Activated B cell treated with CpG ODN at 0.5 μM for 24 hours (primary cell): ENCODE measurements at regions of chr1 and their contacts with region 1.

Region 1: GRCh38 chr1:175481126-175482066 is 262.0 kb downstream of the TNR start:
- DNase-seq: no peak
- ATAC-seq: peak; percentile 50
- H3K4me3 Mint-ChIP-seq: no peak overlapping the region
- H3K27ac Mint-ChIP-seq: no peak overlapping the region
- H3K4me1 Mint-ChIP-seq: peaks cover 2% of the 10 kb centered on the region
- H3K27me3 Mint-ChIP-seq: peaks cover 4% of the 10 kb centered on the region
- CTCF ChIP-seq: no peak

Region 2: GRCh38 chr1:175498002-175498401 is 16.6 kb after region 1 on chr1:
- CTCF ChIA-PET with region 1: no interaction called
- POLR2A ChIA-PET with region 1: no interaction called
- intact Hi-C with region 1: no loop called
- DNase-seq: no peak
- ATAC-seq: no peak
- H3K4me3 Mint-ChIP-seq: no peak overlapping the region
- H3K27ac Mint-ChIP-seq: no peak overlapping the region
- H3K4me1 Mint-ChIP-seq: peaks cover 4% of the 10 kb centered on the region
- H3K27me3 Mint-ChIP-seq: no peaks in the 10 kb centered on the region
- CTCF ChIP-seq: no peak

Region 3: DNA sequence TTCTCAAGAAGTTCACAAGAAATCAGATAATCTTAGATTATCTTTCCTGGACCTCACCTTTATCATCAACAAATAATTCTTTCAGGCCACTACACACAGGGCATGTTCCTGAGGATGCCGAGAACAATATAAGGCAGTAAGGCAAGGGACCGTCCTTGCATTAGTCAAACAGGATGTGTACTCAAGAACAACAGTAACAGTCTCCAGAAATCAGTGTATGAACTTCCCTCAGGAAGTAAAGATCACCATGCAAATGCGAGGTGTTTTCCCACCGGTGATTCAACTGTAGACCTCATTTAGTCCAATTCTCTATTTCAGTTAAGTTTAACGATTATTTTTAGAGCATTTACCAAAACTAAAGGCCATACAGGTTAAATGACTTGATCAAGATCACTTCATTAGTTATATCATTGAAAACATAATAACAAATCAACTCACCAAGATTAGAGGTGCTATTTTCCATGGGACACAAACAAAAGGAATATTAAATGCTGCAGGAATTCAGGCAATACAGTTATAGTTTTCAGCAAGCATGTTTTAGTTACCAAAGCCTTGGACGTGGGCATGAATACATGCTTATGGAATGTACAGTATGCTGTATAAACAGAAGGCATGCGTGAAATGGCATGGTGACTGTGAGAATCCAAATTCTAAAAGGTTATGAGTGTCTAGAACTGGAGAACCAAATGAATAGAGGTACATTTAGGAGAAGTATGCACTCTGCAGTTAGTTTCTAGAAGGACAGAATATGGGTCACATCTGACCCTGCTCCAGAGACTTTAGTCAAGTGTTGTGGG is 116.8 kb after region 1 on chr1:
- CTCF ChIA-PET with region 1: interaction called, 3 read pairs
- POLR2A ChIA-PET with region 1: no interaction called
- intact Hi-C with region 1: loop called (anchors 5 kb)
- DNase-seq: no peak
- ATAC-seq: peak; percentile 34
- H3K4me3 Mint-ChIP-seq: peak overlapping the region; percentile 70
- H3K27ac Mint-ChIP-seq: peak overlapping the region; percentile 86
- H3K4me1 Mint-ChIP-seq: peaks cover 57% of the 10 kb centered on the region
- H3K27me3 Mint-ChIP-seq: peaks cover 2% of the 10 kb centered on the region
- CTCF ChIP-seq: no peak

Region 4: GRCh38 chr1:175742790-175743459 is 261.5 kb after region 1 on chr1:
- CTCF ChIA-PET with region 1: interaction called, 9 read pairs
- POLR2A ChIA-PET with region 1: no interaction called
- intact Hi-C with region 1: loop called (anchors 1 kb)
- DNase-seq: no peak
- ATAC-seq: no peak
- H3K4me3 Mint-ChIP-seq: no peak overlapping the region
- H3K27ac Mint-ChIP-seq: no peak overlapping the region
- H3K4me1 Mint-ChIP-seq: peaks cover 3% of the 10 kb centered on the region
- H3K27me3 Mint-ChIP-seq: peaks cover 29% of the 10 kb centered on the region
- CTCF ChIP-seq: no peak

Region 5: GRCh38 chr1:175824079-175824478 is 342.7 kb after region 1 on chr1:
- CTCF ChIA-PET with region 1: interaction called, 3 read pairs
- POLR2A ChIA-PET with region 1: no interaction called
- intact Hi-C with region 1: loop called (anchors 2 kb)
- DNase-seq: no peak
- ATAC-seq: no peak
- H3K4me3 Mint-ChIP-seq: no peak overlapping the region
- H3K27ac Mint-ChIP-seq: no peak overlapping the region
- H3K4me1 Mint-ChIP-seq: no peaks in the 10 kb centered on the region
- H3K27me3 Mint-ChIP-seq: peaks cover 3% of the 10 kb centered on the region
- CTCF ChIP-seq: no peak

Region 6: GRCh38 chr1:176691251-176692228 is 1210.1 kb after region 1 on chr1:
- CTCF ChIA-PET with region 1: no interaction called
- POLR2A ChIA-PET with region 1: no interaction called
- intact Hi-C with region 1: loop called (anchors 5 kb)
- DNase-seq: no peak
- ATAC-seq: no peak
- H3K4me3 Mint-ChIP-seq: no peak overlapping the region
- H3K27ac Mint-ChIP-seq: no peak overlapping the region
- H3K4me1 Mint-ChIP-seq: no peaks in the 10 kb centered on the region
- H3K27me3 Mint-ChIP-seq: peaks cover 7% of the 10 kb centered on the region
- CTCF ChIP-seq: no peak